WTC11 (cell line): ENCODE measurements at regions of chr1 and their contacts with region 1.

Region 1: DNA sequence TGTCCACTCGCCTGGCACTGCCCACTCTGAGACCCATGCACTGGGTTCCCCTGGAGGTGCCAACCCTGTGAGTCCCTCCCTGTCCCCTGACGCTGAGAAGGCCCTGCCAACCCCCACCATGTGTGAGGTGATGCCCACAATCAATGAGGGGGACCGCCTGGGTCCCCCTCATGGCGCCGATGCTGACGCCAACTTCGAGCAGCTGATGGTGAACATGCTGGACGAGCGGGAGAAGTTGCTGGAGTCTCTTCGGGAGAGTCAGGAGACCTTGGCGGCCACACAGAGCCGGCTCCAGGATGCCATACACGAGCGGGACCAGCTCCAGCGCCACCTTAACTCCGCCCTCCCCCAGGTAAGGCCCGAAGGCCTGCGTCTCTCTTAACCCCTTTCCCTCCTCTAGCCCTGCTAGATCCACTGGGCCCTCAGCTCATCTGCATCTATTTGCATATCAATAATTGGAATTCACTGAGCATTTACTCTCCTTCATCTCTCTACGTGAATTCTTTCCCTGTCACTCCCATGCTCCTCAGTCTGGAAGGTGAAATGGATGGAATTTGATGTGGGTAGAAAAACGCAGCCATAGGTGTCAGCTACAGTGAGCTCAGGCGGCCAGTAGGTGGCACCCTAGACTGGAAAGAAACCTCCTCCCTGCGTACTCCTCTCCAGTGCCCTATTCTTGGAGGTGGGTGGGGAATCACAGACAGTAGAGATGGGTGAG is 12.8 kb downstream of the PPFIA4 start:
- DNase-seq: peak; percentile 80
- ATAC-seq: peak; percentile 84
- H3K4me3 Mint-ChIP-seq: no peak overlapping the region
- H3K27ac Mint-ChIP-seq: no peak overlapping the region
- H3K4me1 Mint-ChIP-seq: peaks cover 26% of the 10 kb centered on the region
- H3K27me3 Mint-ChIP-seq: no peaks in the 10 kb centered on the region; the same call in 1 of the 2 replicates
- CTCF ChIP-seq: peak; percentile 54

Region 2: DNA sequence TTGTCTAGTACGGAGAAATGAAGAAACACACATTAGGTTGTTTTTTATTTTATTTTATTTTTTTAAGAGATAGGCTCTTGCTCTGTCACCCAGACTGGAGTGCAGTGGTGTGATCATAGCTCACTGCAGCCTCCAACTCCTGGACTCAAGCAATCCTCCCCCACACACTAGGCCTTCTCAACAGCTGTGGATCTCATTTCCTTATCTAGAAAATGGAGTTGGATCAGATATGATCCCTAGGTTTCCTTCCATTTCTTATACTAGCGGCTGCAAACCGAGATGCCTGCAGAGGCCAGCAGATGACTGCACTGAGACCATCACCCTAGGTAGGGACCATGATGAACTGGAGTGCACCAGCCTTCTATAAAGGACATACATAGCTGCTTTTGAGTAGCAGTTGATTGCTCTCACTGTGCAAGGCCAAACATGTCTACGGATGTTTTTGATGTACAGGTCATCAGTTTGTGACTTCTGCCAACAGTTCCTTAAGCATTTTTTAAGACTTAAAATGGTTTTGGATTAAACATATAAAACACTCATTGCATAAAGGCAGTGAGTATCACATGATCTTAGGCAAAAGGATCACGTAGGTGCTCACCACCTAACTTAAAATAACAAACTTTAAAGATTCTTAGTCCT is 100.6 kb before region 1 on chr1:
- CTCF ChIA-PET with region 1: no interaction called
- POLR2A ChIA-PET with region 1: no interaction called
- DNase-seq: no peak
- ATAC-seq: no peak
- H3K4me3 Mint-ChIP-seq: no peak overlapping the region
- H3K27ac Mint-ChIP-seq: no peak overlapping the region
- H3K4me1 Mint-ChIP-seq: no peaks in the 10 kb centered on the region
- H3K27me3 Mint-ChIP-seq: peaks cover 8% of the 10 kb centered on the region
- CTCF ChIP-seq: no peak

Region 3: DNA sequence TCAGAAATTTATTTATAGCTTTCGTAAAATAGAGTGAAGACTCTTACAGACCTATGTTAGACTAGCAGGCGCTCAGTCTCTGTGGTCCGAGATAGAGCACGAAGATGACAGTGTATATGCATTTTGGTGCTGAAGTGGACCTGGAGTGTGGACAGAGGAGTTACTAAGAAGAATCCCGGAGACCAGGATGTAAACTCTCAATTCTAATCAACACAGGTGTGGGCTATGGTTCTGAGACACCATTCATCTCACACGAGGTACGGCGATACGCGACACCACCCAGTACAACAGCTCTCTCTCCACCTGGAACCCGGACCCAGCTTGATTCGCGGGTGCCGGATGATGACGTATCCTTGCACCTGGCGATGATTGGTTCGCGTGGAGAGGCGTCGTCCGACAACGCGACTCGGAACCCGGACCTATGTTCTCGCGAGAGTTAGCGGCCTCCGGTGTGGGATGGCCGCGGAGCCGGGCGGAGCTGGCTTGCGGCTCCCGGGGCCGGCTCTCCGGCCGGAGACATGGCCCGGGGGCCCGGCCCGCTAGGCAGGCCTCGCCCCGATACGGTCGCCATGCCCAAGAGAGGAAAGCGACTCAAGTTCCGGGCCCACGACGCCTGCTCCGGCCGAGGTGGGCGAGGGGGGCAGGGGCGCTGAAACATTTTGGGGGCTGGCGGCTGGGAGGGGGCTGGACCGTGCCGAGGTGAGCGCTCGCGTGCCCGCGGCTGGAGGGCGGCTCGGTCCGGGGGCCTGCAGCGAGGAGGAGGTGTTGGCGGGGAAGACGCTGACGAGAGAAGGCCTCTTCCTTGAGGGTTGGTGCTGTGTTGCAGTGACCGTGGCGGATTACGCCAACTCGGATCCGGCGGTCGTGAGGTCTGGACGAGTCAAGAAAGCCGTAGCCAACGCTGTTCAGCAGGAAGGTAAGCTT is 31.8 kb before region 1 on chr1 and contains the start of gene TMEM183A:
- CTCF ChIA-PET with region 1: interaction called, 16 read pairs
- POLR2A ChIA-PET with region 1: no interaction called
- DNase-seq: peak; percentile 98
- ATAC-seq: peak; percentile 91
- H3K4me3 Mint-ChIP-seq: peak within 1 kb of the TSS; percentile 96
- H3K27ac Mint-ChIP-seq: peak within 1 kb of the TSS; percentile 100
- H3K4me1 Mint-ChIP-seq: peaks cover 23% of the 10 kb centered on the region
- H3K27me3 Mint-ChIP-seq: no peaks in the 10 kb centered on the region
- CTCF ChIP-seq: no peak
- total RNA-seq, gene TMEM183A: 97.4 to 108 TPM (median 99.8 TPM) in 3 replicates

Region 4: GRCh38 chr1:203076031-203076511 is 37.0 kb after region 1 on chr1:
- CTCF ChIA-PET with region 1: interaction called, 123 read pairs
- POLR2A ChIA-PET with region 1: no interaction called
- DNase-seq: peak; percentile 26
- ATAC-seq: peak; percentile 41
- H3K4me3 Mint-ChIP-seq: peak overlapping the region; percentile 45
- H3K27ac Mint-ChIP-seq: no peak overlapping the region
- H3K4me1 Mint-ChIP-seq: peaks cover 4% of the 10 kb centered on the region
- H3K27me3 Mint-ChIP-seq: peaks cover 19% of the 10 kb centered on the region
- CTCF ChIP-seq: no peak

Region 5: GRCh38 chr1:203127666-203128430 is 88.8 kb after region 1 on chr1 and contains the start of gene ADORA1:
- CTCF ChIA-PET with region 1: interaction called, 128 read pairs
- POLR2A ChIA-PET with region 1: no interaction called
- DNase-seq: peak; percentile 80
- ATAC-seq: peak; percentile 87
- H3K4me3 Mint-ChIP-seq: peak within 1 kb of the TSS; percentile 67
- H3K27ac Mint-ChIP-seq: no peak within 1 kb of the TSS
- H3K4me1 Mint-ChIP-seq: peaks cover 33% of the 10 kb centered on the region
- H3K27me3 Mint-ChIP-seq: peaks cover 37% of the 10 kb centered on the region
- CTCF ChIP-seq: no peak
- total RNA-seq, gene ADORA1: 1.8 to 2.7 TPM (median 2.6 TPM) in 3 replicates

Region 6: GRCh38 chr1:203172128-203173010 is 133.3 kb after region 1 on chr1:
- CTCF ChIA-PET with region 1: interaction called, 78 read pairs
- POLR2A ChIA-PET with region 1: no interaction called
- DNase-seq: peak; percentile 88
- ATAC-seq: peak; percentile 91
- H3K4me3 Mint-ChIP-seq: no peak overlapping the region
- H3K27ac Mint-ChIP-seq: no peak overlapping the region
- H3K4me1 Mint-ChIP-seq: peaks cover 11% of the 10 kb centered on the region
- H3K27me3 Mint-ChIP-seq: no peaks in the 10 kb centered on the region
- CTCF ChIP-seq: peak; percentile 96

Region 7: GRCh38 chr1:203216274-203217138 is 177.5 kb after region 1 on chr1:
- CTCF ChIA-PET with region 1: interaction called, 185 read pairs
- POLR2A ChIA-PET with region 1: no interaction called
- DNase-seq: peak; percentile 75
- ATAC-seq: peak; percentile 75
- H3K4me3 Mint-ChIP-seq: peak overlapping the region; percentile 29
- H3K27ac Mint-ChIP-seq: peak overlapping the region; percentile 34
- H3K4me1 Mint-ChIP-seq: peaks cover 17% of the 10 kb centered on the region
- H3K27me3 Mint-ChIP-seq: peaks cover 6% of the 10 kb centered on the region
- CTCF ChIP-seq: peak; percentile 75

Region 8: DNA sequence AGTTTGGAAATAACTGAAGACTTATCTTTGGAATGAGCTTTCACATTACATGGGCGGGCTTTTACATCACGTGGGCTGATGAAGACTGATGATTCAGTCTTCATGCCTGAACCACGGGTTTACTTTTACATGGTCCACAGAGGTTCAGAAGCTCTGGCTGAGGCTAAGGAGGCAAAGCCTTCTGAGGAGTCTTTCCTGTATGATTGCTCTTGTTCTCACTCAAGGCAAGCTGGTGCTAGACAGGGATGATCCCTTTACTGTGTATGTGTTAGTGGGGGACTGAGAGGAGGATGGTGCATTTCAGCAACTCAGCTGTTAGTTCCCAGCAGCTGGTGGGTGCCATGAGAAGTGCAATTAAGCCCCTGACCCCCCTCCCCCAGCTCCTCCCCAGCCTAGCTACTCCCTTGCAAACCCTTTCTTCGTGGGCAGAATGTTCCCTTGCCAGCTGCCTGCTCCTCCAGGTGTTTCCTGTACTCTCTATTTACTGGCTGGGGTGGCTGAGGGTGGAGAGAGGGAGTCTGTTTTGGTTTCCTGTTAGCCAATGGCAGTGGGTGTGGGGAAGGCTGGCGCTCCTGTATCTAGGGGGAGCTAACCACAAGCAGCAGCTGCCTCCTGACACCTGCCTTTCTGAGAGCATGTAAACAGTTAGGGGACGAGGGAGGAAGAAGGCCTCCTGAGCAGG is 281.7 kb after region 1 on chr1:
- CTCF ChIA-PET with region 1: interaction called, 14 read pairs
- POLR2A ChIA-PET with region 1: no interaction called
- DNase-seq: peak; percentile 63
- ATAC-seq: peak; percentile 97
- H3K4me3 Mint-ChIP-seq: no peak overlapping the region
- H3K27ac Mint-ChIP-seq: no peak overlapping the region
- H3K4me1 Mint-ChIP-seq: peaks cover 36% of the 10 kb centered on the region
- H3K27me3 Mint-ChIP-seq: peaks cover 96% of the 10 kb centered on the region
- CTCF ChIP-seq: no peak